Cardiac septum (tissue), 1 donor: ENCODE measurements at regions of chr14 and their contacts with region 1.

Region 1: DNA sequence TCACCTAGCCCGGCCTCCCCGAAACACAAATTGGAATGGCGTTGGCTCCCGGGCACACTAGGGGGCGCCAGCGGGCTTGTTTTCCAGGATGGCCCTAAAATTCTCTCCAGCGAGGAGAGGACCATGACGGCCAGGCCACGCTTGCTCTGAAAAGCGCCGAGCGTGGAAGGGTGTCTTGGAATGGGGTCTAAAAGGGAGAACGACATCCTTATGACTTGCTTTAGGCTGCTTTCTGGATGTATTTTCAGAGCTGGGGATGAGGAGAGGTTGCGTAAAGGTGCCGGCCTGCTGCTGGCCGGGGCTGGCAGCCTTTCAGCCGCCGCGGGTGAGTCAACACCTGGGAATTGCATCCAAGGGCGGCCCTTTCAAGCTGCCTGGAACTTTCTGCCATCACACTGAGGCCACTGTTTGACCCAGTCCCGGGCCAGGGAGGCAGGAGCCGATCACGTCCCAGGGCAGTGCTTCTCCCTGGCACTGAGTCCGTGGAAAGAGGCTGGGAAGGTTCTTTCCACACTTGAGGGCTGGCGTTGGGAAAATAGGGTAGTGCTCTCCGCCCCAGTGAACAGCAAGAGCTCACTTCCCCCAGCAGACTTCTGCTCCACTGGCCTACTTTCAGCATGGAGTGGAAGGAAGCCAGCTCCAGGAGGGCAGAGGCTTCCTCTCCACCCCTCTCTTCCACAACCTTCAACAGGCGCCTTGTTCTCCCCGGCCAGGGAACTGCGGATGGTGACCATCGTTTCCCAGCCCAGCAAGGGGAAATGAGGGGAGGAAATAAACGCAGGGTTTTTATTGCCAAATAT is 216.2 kb downstream of the TTC8 start:
- DNase-seq: peak; percentile 92

Region 2: DNA sequence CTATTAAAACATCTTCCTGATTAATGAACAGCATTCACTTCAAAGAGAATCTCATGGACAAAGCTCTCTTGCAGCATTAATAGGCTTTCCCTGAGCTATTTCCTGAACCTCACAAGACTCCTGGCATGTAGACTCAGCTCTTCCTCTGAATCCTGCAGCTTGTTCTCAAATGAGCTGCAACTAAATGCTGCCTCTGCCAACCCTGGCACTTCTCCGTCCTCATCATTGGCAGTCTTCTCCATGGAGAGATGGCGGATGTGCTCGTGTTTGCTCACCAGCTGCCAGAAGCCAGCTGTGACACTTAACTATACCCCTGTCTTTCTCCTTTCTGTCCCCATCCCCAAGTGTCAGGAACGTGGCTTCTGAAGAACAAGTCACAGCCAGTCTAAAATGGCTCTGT is 144.3 kb after region 1 on chr14:
- intact Hi-C with region 1: loop called (anchors 5 kb)
- DNase-seq: no peak

Region 3: GRCh38 chr14:89303457-89304435 is 263.1 kb after region 1 on chr14:
- intact Hi-C with region 1: loop called (anchors 2 kb)
- DNase-seq: peak; percentile 85

Region 4: DNA sequence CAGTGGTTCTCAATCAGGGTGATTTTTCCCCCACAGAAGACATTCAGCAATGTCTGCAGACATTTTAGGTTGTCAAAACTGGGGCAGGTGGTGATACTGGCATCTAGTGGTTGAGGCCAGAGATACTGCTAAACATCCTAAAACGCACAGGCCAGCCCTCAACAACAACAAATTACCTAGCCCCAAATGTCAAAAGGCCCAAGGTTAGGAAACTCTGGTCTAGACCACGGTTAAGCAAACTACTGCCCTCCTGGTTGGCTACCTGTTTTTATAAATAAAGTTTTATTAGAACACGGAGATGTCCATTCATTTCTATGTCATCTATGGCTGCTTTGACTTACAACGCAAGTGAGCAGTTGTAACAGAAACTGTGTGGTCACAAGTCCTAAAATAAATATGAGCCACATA is 727.2 kb after region 1 on chr14:
- intact Hi-C with region 1: loop called (anchors 10 kb)
- DNase-seq: no peak

Region 5: GRCh38 chr14:89915114-89915878 is 874.6 kb after region 1 on chr14:
- intact Hi-C with region 1: loop called (anchors 5 kb)
- DNase-seq: no peak